Thyroid gland (tissue), 4 donors: ENCODE measurements at regions of chr15 and their contacts with region 1.

Region 1: GRCh38 chr15:59104912-59105732 is at the start of gene CCNB2:
- DNase-seq: peak; percentile 84 to 85
- H3K4me3 ChIP-seq: peak within 1 kb of the TSS; percentile 39 to 71 (median 58)
- H3K27ac ChIP-seq: no peak within 1 kb of the TSS
- H3K4me1 ChIP-seq: no peaks in the 10 kb centered on the region
- H3K27me3 ChIP-seq: no peaks in the 10 kb centered on the region
- CTCF ChIP-seq: no peak
- POLR2A ChIP-seq: peak in 1 of 2 donors; percentile 37
- total RNA-seq, gene CCNB2: 1.1 to 2.1 (median 1.7) TPM

Region 2: DNA sequence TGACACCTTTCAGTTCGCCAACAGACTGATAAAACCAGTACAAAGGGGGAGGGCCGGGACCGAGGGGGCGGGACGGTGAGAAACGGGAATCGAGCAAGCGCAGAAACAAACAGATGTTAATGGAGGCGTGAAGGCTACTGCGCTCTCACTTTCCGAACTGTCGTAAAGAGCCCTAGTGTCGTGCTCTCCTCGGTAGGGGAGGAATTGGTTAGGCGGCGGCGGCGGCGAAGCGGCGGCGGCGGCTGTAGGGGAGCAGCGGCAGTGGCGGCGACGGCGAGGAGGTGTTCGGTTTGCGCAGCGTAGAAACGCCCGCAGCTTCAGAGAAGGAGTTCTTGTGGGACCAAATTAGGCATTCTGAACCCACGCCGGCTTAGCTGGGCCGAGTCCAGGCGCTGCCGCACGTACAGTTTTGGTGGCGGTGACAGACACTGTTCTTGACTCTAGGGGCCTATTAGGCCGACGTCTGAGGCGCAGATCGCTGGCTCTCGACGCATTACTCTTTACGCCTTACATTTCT is 117.6 kb before region 1 on chr15 and contains the start of gene RNF111:
- intact Hi-C with region 1: loop called (anchors 10 kb)
- DNase-seq: peak; percentile 89 to 90
- H3K4me3 ChIP-seq: peak within 1 kb of the TSS; percentile 88 to 95 (median 91)
- H3K27ac ChIP-seq: peak within 1 kb of the TSS; percentile 69 to 90 (median 86)
- H3K4me1 ChIP-seq: peaks cover 0 to 12% of the 10 kb centered on the region in 2 donors
- H3K27me3 ChIP-seq: no peaks in the 10 kb centered on the region
- CTCF ChIP-seq: no peak
- POLR2A ChIP-seq: peak; percentile 38 to 79
- total RNA-seq, gene RNF111: 19.1 to 33.2 (median 27.4) TPM